GM23248 (cell line): ENCODE measurements at regions of chr11 and their contacts with region 1.

Region 1: DNA sequence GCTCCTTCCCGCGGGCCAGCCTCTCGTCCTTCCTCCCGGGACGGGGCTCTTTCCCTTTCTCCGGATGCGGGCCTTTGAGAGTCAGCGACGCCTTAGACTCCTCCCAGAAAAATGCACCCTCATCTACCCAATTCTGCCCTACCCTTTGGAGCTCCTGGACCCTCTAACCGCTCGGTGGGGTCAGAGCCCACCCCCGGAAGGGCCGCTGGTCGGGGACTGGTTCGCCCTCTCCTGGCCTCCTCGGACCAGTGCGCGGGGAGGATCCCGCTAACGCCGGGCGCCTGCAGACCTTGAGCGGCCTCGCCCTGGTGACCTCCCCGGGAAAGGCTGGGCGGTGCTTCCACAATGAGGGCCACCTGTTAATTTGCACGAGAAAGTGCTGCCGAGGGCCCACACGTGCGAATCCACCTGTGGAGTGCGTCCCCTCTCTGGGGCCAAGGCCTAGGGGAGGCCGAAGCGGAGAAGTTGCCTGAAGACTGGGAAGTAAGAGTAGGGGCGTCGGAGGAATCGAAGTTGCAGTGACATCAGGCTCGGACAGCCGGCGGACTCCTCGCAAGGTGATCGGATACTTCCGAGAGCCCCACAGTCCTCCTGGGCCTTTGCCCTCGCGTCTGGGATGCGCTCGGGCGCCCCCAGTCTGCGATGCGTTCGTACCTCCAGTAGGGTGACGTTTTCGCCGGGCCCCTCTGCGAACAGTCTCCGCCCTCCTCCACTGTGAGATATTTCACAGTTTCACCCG is 61.5 kb downstream of the ENDOD1 start:
- DNase-seq: peak; percentile 97
- H3K4me3 ChIP-seq: peak overlapping the region; percentile 74
- H3K27ac ChIP-seq: 0 out of 2 replicates have a peak overlapping the region, but pooled peaks have one; percentile 17
- H3K4me1 ChIP-seq: peaks cover 28% of the 10 kb centered on the region
- H3K27me3 ChIP-seq: no peaks in the 10 kb centered on the region

Region 2: GRCh38 chr11:94283678-94284077 is 867.4 kb before region 1 on chr11:
- in situ Hi-C with region 1: no loop called
- DNase-seq: no peak
- H3K4me3 ChIP-seq: no peak overlapping the region
- H3K27ac ChIP-seq: no peak overlapping the region
- H3K4me1 ChIP-seq: no peaks in the 10 kb centered on the region
- H3K27me3 ChIP-seq: no peaks in the 10 kb centered on the region

Region 3: GRCh38 chr11:94948070-94948617 is 203.0 kb before region 1 on chr11:
- in situ Hi-C with region 1: no loop called
- DNase-seq: peak; percentile 56
- H3K4me3 ChIP-seq: no peak overlapping the region
- H3K27ac ChIP-seq: peak overlapping the region; percentile 34; the same call in 1 of the 2 replicates
- H3K4me1 ChIP-seq: 0 out of 2 replicates have a peak, but pooled peaks cover 10% of the 10 kb centered on the region
- H3K27me3 ChIP-seq: no peaks in the 10 kb centered on the region

Region 4: DNA sequence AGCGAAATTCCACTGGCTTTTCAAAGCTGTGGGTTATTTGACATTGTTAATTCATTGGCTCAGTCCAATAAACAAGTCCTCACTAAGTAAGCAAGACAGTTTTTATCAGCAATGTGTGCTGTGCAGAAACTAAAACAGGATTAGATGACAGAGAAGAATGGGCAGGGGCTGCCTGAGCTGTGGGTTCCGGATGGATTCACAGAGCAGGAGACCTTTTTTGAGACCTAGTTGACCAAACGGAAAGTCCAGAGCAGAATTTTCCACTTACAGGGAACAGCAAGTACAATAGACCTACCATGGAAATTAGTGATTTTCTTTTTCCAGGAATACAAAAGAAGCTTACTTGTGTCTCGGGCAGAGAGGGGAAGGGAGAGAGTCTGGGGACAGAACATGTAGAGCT is 107.1 kb before region 1 on chr11:
- in situ Hi-C with region 1: no loop called
- DNase-seq: no peak
- H3K4me3 ChIP-seq: no peak overlapping the region
- H3K27ac ChIP-seq: no peak overlapping the region
- H3K4me1 ChIP-seq: no peaks in the 10 kb centered on the region
- H3K27me3 ChIP-seq: peaks cover 49% of the 10 kb centered on the region

Region 5: DNA sequence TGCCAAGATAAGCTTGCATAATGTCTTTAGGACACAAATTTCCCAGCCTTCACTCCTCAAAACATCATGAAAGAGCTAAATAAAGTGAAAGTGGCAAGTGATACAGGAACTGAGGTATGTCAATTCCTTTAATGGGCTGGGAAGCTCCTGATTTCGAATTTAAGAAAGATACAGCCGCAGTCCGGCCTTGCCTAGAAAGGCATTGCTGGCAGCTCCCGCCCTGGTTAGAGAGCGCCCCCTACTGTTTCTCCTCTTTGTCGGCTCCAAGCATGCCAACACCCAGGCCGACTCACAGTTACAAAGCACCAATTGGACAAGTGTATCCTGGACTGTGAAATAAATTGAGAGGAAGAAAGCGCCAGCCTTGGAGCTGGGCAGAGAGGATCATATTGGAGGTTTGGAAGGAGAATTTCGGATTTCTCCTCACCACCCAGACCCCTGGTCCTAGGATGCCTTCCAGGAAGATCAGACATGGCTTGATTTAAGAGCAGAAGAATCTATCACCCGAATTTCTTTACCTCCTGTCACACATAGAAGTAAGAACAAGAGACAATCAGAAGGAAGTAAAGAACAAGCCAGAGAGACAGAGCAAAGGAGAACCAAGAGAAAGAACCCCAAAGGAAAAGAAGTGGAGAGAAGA is 554.5 kb after region 1 on chr11:
- in situ Hi-C with region 1: loop called (anchors 5 kb)
- DNase-seq: peak; percentile 92
- H3K4me3 ChIP-seq: no peak overlapping the region
- H3K27ac ChIP-seq: no peak overlapping the region
- H3K4me1 ChIP-seq: peaks cover 23% of the 10 kb centered on the region
- H3K27me3 ChIP-seq: no peaks in the 10 kb centered on the region

Region 6: GRCh38 chr11:95764267-95764898 is 613.3 kb after region 1 on chr11:
- in situ Hi-C with region 1: loop called (anchors 10 kb)
- DNase-seq: peak; percentile 84
- H3K4me3 ChIP-seq: no peak overlapping the region
- H3K27ac ChIP-seq: no peak overlapping the region
- H3K4me1 ChIP-seq: peaks cover 23% of the 10 kb centered on the region
- H3K27me3 ChIP-seq: no peaks in the 10 kb centered on the region

Region 7: DNA sequence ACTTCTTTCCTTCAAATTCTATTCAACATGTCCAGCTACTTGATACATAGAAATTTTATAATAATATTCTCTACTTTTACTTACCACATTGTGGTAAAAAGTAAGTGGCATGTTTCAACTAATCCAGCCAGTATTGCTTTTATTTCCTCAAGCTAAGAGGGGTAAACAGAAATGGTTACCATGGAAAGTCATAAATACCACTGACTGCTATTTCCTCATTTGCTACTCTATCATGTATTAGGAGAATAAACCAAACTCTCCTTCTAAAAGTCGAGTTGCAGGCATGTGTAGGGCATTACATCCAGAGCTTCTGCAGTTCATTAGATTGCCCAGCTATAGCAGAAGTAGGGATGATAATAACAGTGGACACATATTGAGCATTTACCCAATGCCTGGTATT is 983.5 kb after region 1 on chr11:
- in situ Hi-C with region 1: no loop called
- DNase-seq: peak; percentile 45
- H3K4me3 ChIP-seq: no peak overlapping the region
- H3K27ac ChIP-seq: peak overlapping the region; percentile 16; the same call in 1 of the 2 replicates
- H3K4me1 ChIP-seq: peaks cover 21% of the 10 kb centered on the region
- H3K27me3 ChIP-seq: no peaks in the 10 kb centered on the region

Region 8: GRCh38 chr11:96389720-96390487 is 1238.8 kb after region 1 on chr11 and contains the starts of genes CCDC82 and JRKL:
- in situ Hi-C with region 1: loop called (anchors 25 kb)
- DNase-seq: peak; percentile 98
- H3K4me3 ChIP-seq: peak within 1 kb of the TSS; percentile 95
- H3K27ac ChIP-seq: peak within 1 kb of the TSS; percentile 89
- H3K4me1 ChIP-seq: peaks cover 46% of the 10 kb centered on the region
- H3K27me3 ChIP-seq: no peaks in the 10 kb centered on the region
- total RNA-seq, gene CCDC82: 14.8 and 19.1 TPM in 2 replicates
- total RNA-seq, gene JRKL: 9.4 and 11.9 TPM in 2 replicates